Common myeloid progenitor, CD34-positive (primary cell): ENCODE measurements at regions of chr3 and their contacts with region 1.

Region 1: DNA sequence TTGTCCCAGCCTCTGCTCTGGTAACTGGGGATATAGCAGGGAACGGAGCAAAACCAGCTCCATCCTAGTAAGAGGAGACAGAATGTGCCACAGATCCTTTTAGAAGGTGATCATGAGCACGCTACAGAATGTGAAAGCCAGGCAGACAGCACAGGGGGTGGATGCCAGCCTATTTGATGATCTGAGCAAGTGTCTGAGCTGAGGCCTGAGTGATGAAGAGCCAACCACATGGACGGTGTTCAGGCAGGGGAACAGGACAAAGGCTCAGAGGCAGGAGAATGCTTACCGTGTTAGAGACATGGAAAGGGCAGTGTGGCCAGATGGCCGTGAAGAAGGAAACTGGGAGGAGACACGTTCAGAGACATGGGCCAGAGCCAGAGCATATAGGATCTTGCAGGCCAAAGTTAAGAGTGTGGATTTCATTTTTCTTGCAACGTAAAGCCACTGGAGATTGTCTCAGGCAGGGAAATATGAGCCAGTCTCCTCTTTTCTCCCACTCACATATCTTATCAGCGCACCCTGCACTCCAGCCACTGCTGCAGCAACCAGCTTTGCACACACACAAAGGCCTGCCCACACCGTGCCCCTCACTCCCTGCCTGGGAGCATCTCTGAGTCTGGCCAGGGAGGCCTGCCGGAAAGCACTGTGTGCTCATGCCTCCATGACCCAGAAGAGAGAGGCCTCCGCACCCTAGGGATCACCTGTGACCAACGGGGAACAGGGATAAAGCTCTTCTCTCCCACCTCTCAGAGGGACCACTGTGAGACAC is 20.1 kb downstream of the RAB43 start:
- DNase-seq: no peak
- H3K4me3 ChIP-seq: no peak overlapping the region
- H3K27ac ChIP-seq: no peak overlapping the region
- H3K4me1 ChIP-seq: no peaks in the 10 kb centered on the region
- H3K27me3 ChIP-seq: no peaks in the 10 kb centered on the region

Region 2: DNA sequence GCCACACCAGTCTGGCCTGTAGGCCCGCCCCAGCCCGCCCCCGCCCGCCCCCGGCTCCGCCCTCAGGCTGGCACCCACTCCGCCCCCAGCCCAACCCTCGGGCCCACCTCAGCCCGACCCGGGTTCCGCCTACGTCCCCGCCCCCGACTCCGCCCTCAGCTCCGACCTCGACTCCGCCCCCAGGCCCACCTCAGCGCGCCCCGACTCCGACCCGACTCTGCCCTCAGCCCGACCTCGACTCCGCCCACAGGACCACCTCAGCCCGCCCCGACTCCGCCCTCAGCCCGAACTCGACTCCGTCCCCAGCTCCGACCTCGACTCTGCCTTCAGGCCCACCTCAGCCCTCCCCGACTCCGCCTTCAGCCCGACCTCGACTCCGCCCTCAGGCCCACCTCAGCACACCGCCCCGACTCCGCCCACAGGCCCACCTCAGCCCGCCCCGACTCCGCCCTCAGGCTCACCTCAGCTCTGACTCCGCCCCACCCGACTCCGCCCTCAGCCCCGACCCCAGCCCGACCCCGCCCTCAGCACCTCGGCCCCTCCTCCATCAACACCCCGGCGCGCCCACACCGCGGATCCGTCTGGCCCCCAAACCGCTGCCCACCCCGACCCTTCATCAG is 20.3 kb after region 1 on chr3 and contains the start of gene RAB43:
- CTCF ChIA-PET with region 1: interaction called, 10 read pairs
- POLR2A ChIA-PET with region 1: no interaction called
- DNase-seq: peak; percentile 81 to 88 (median 86)
- H3K4me3 ChIP-seq: peak within 1 kb of the TSS; percentile 58 to 90 (median 78)
- H3K27ac ChIP-seq: peak within 1 kb of the TSS in 1 of 2 experiments; percentile 66
- H3K4me1 ChIP-seq: peaks cover 11 to 58% (median 46%) of the 10 kb centered on the region in 4 experiments
- H3K27me3 ChIP-seq: no peaks in the 10 kb centered on the region